ENCODE measurements at regions of chr17 and their contacts with region 1.

Region 1: DNA sequence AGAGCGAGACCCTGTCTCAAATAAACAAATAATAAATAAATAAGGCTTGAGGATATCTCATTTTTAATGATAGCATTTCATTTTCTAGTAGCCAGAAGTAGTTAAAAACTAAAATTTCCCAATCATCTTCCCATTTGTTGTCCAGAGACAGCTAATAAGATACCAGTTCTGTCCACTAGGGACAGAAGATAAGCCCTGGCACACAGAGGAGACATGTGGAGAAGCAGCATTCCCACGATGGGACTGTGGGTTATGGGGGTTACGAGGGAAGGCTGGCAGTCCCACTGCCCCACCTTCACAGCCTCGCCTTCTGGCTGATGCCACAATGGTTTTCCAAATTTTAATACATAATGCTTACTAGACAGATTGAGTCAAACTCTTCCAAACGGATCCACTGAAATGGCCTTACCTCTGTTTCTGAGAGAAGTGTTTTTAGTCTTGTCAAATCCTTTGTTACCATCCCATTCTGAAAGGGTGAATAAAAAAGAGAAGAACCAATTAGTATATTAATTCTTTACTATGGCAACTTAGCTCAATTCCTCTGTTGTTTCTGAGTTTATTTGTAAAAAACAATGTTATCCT is 44.2 kb downstream of the HELZ start:
- DNase-seq: no peak
- H3K4me3 ChIP-seq: no peak overlapping the region
- H3K27ac ChIP-seq: no peak overlapping the region
- H3K4me1 ChIP-seq: no peaks in the 10 kb centered on the region
- H3K27me3 ChIP-seq: no peaks in the 10 kb centered on the region
- CTCF ChIP-seq: no peak
- POLR2A ChIP-seq: no peak

Region 2: GRCh38 chr17:67679225-67679624 is 478.4 kb after region 1 on chr17:
- intact Hi-C with region 1: loop called (anchors 5 kb)
- DNase-seq: no peak
- H3K4me3 ChIP-seq: no peak overlapping the region
- H3K27ac ChIP-seq: no peak overlapping the region
- H3K4me1 ChIP-seq: no peaks in the 10 kb centered on the region
- H3K27me3 ChIP-seq: no peaks in the 10 kb centered on the region
- CTCF ChIP-seq: no peak
- POLR2A ChIP-seq: no peak